ENCODE measurements at regions of chr1 and their contacts with region 1.

Region 1: GRCh38 chr1:230797942-230798418 is 50.8 kb downstream of the CAPN9 start:
- DNase-seq: peak; percentile 89
- H3K4me3 ChIP-seq: no peak overlapping the region
- H3K27ac ChIP-seq: no peak overlapping the region
- H3K4me1 ChIP-seq: no peaks in the 10 kb centered on the region
- H3K27me3 ChIP-seq: no peaks in the 10 kb centered on the region

Region 2: DNA sequence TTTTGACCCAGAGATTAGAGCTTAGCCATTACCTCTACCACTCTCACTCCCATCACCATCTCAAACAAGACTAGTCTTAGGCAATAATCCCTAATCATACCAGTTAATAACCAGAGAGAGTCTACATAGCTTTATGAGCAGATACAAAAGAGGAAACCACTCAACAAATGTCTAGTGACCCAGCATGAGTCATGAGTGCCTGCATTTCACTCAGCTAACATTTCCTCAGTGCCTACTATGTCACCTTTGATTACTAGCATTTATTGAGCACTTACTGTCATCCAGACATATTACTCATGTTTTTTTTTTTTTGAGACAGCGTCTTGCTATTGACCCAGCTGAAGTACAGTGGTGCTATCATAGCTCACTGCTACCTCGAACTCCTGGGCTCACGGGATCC is 766.8 kb before region 1 on chr1:
- in situ Hi-C with region 1: no loop called
- DNase-seq: peak; percentile 26
- H3K4me3 ChIP-seq: no peak overlapping the region
- H3K27ac ChIP-seq: no peak overlapping the region
- H3K4me1 ChIP-seq: no peaks in the 10 kb centered on the region
- H3K27me3 ChIP-seq: no peaks in the 10 kb centered on the region

Region 3: DNA sequence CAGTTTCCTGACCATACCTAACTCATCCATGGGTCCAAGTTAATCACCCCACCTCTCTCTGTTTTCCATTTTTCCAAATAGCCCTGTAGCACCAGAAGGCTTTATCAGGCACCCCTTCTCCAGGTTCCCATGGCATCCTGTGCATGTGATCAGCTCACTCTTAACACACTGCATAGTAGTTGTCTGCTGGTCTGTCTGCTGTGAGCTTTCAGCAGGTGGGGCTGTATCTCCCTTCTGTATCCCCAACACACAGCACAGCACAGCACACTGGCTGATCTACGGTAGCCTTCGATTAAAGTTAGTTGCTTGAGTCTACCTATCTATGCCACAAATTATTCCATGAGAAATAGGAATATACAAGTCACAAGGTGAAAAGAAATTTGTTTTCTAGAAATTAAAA is 124.6 kb after region 1 on chr1:
- in situ Hi-C with region 1: loop called (anchors 10 kb)
- DNase-seq: no peak
- H3K4me3 ChIP-seq: no peak overlapping the region
- H3K27ac ChIP-seq: no peak overlapping the region
- H3K4me1 ChIP-seq: no peaks in the 10 kb centered on the region
- H3K27me3 ChIP-seq: no peaks in the 10 kb centered on the region

Region 4: DNA sequence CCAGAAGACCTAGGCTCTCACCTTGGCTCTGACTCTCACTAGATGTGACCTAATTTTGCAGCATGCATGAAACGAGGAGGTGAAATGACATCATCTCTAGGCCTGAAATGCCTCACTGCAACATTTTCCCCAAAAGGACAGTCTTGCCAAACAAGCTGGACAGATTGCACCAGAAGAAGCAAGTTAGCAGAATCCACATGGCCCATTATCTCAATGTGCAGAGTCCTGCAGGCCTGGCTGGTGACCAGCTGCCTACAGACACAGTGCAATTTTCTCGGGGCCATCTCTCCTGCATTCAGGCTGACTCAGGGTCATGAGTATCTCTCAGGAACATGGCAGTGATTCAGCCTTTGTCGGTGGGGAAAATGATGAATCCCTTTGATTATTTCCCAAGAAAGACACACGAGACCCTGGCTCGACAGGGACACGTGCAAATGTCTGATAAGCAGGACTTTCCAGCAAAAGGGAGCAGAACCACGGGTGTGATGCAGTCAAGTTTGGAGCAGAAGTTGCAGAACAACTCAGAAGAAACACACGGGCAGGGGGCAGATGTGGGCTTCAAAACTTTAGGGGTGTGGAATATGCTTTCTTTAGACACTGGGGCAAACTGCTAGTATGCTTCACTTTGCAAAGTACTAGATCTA is 402.5 kb after region 1 on chr1:
- in situ Hi-C with region 1: loop called (anchors 10 kb)
- DNase-seq: peak; percentile 62
- H3K4me3 ChIP-seq: no peak overlapping the region
- H3K27ac ChIP-seq: no peak overlapping the region
- H3K4me1 ChIP-seq: no peaks in the 10 kb centered on the region
- H3K27me3 ChIP-seq: no peaks in the 10 kb centered on the region; the same call in 1 of the 2 replicates